Cardiac septum (tissue), 1 donor: ENCODE measurements at regions of chr7 and their contacts with region 1.

Region 1: GRCh38 chr7:123865517-123866117 is 20.6 kb downstream of the HYAL4 start:
- DNase-seq: no peak

Region 2: DNA sequence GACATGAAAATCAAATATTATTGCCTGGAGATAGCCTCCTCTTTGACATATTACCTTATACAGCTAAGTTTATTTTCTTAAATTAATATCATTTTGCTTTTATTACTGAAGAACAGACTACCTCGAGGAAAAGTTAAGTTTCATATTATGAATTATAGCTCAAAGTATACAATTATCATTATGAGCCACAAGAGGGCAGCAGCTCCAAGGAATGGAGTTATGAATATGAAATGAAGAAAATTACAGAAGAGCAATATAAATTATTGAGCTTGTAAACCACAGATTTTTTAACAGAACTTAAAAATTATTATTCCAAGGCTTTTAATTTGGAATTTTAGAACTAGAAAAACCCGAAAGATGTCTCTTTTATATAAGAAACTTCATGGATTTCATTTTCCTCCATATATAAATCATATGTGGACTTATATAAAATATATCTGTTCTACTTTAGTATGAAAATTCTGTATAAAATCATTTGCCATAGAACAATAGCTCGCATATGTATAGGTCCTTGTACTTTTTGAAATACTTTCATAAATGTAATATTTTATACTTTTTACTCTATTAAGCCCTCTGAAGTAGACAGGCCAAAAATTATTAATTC is 371.3 kb before region 1 on chr7:
- intact Hi-C with region 1: loop called (anchors 10 kb)
- DNase-seq: no peak

Region 3: GRCh38 chr7:123580406-123581161 is 285.0 kb before region 1 on chr7:
- intact Hi-C with region 1: loop called (anchors 5 kb)
- DNase-seq: no peak

Region 4: DNA sequence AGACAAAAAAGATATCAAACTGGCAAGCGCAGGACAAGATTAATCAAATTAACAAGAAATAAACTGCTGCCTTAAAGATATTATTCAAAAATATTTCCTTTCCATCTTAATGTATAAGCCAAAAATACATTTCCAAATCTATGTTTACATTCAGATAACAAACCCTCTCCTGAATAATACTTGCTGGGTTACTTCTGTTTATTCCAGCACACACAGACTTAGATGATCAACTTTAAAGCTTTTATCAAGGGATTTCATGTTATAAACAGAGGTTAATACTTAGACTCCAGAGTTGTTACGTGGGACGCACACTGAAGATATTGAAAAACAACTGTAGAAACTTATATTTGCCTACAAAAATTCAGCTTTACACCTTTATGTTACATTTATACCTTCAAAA is 176.4 kb before region 1 on chr7:
- intact Hi-C with region 1: loop called (anchors 5 kb)
- DNase-seq: no peak

Region 5: DNA sequence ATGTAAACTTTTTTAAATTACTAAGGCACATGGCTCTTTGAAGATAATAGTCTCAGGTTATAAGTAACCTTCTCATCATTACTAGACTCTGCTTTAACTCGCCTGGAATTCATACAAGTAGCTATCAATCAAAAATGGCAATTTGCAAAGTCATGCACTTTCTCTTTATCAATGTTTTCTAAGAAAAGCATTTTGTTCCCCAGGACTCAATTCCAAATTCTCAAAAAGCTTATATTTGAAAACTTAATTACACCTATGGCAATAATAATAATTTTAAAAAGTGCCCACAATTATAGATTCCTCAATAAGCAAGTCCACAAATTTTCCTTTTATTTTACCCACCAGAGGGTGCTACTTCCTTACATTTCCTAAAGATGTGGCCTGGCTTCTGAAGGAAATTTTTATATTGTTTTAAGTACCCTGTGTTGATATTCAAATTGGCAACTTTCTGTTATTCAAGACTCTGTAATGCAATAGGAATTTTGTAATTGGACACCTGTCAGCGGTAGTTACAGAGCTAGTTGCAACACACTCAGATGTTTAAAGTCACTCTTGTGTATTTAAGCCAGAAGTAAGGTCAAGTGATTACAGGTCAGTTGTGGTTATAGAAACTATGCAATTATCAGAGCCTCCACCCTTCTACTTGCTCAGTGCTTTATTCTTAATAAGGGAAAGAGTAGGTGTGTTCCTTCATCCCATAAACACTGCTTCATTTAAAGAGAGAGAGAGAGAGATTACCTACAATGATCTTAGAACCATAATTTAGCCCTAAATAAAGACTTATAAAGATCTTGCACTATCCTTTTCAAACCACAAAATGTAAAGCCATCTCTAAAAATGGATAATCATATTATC is 67.7 kb before region 1 on chr7:
- intact Hi-C with region 1: loop called (anchors 5 kb)
- DNase-seq: no peak